ENCODE measurements at regions of chr9 and their contacts with region 1.

Region 1: DNA sequence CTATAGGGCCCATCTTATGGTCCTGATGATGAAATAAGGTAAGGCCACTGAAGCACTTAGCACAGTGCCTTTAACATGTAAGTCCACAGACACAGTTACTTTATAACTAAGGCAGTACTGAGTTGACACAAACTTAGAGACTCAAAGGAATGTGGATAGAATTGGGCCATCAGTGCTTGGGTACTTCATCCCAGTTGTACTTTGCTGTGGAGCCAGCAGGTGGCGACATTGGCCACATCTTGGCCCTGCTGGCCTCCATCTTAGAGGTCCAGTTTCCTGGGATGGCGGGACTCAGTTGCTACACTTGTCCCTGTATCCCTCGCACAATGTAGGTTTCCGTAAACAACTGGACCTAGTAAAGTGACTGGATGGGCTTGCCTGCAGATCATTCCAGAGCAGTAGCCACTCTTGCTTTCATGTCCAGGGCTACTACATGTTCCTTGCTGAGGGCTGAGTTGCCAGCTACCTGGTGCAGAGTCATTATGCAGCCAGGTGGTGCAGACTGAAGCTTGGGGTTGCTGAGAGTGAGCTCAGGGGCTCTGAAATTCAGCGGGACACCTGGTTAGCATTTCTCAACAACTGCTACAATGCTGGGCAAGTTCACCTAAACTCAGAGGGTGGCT is 10.6 kb downstream of the MTAP start:
- DNase-seq: peak; percentile 81
- H3K4me3 ChIP-seq: no peak overlapping the region
- H3K27ac ChIP-seq: peak overlapping the region; percentile 85
- H3K4me1 ChIP-seq: peaks cover 20% of the 10 kb centered on the region
- H3K27me3 ChIP-seq: no peaks in the 10 kb centered on the region
- CTCF ChIP-seq: peak; percentile 86 to 89
- POLR2A ChIP-seq: no peak

Region 2: DNA sequence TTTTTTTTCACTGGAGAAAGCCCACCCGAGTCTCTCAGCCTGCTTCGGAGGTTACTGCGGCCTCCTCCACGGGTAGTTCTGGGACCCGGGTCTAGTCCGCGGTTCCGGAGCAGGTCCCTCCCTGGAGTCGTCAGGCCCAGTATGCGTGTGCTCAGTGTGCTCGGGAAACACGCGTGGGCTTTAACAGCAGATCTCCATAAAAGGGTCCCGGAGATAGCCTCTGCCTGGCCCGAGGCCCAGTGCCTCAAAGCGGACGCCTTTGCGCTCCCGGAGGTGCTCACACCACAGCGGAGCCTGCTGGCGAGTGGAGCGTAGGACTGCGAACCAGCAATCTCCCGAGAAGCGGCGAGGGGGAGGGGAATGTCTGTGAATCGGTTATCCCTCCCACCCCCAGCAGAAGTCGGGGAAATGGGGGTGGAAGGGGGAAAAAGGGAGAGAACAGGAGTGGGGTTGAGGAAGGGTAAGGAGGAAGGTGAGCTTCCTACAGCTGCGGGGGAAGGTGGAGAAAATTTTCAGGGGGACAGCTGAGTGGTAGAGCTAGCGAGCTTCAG is 152.4 kb after region 1 on chr9:
- CTCF ChIA-PET with region 1: interaction called, 39 read pairs
- POLR2A ChIA-PET with region 1: no interaction called
- dilution Hi-C with region 1: no loop called
- intact Hi-C with region 1: loop called (anchors 1 kb)
- DNase-seq: peak; percentile 68
- H3K4me3 ChIP-seq: peak overlapping the region; percentile 34 to 46 (median 40)
- H3K27ac ChIP-seq: no peak overlapping the region
- H3K4me1 ChIP-seq: peaks cover 28% of the 10 kb centered on the region
- H3K27me3 ChIP-seq: peaks cover 57 to 84% of the 10 kb centered on the region in 2 experiments
- CTCF ChIP-seq: peak; percentile 75 to 80
- POLR2A ChIP-seq: no peak

Region 3: DNA sequence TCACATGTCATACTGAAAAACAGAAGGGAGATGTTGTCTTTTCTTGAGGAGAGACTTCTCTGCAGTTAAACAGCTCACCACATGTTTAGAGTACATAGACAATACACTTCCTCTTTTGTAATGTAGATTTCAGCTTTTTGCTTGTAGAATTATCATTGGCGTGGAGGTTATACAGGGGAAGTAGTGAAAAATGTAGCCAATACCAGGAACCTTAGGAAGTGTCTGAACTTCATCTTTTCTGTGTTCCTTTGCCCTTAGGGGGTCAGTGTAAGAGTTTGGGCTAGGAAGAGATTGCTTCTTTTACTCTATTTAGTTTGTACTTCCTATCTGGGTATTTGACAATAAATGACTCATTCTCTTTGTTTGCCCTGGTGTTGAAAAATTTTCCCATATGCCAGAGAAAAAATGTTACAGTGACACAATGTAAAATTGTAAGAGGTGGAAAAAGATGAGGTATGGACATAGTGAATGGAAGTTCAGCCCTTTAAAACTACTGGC is 217.1 kb after region 1 on chr9:
- CTCF ChIA-PET with region 1: interaction called, 77 read pairs
- POLR2A ChIA-PET with region 1: no interaction called
- dilution Hi-C with region 1: no loop called
- intact Hi-C with region 1: no loop called
- DNase-seq: peak; percentile 83
- H3K4me3 ChIP-seq: no peak overlapping the region
- H3K27ac ChIP-seq: peak overlapping the region; percentile 44
- H3K4me1 ChIP-seq: peaks cover 12% of the 10 kb centered on the region
- H3K27me3 ChIP-seq: no peaks in the 10 kb centered on the region
- CTCF ChIP-seq: no peak
- POLR2A ChIP-seq: no peak

Region 4: GRCh38 chr9:22119537-22120158 is 306.6 kb after region 1 on chr9:
- CTCF ChIA-PET with region 1: interaction called, 81 read pairs
- POLR2A ChIA-PET with region 1: no interaction called
- dilution Hi-C with region 1: no loop called
- intact Hi-C with region 1: loop called (anchors 1 kb)
- DNase-seq: peak; percentile 53
- H3K4me3 ChIP-seq: no peak overlapping the region
- H3K27ac ChIP-seq: no peak overlapping the region
- H3K4me1 ChIP-seq: peaks cover 26% of the 10 kb centered on the region
- H3K27me3 ChIP-seq: no peaks in the 10 kb centered on the region
- CTCF ChIP-seq: peak; percentile 35 to 53
- POLR2A ChIP-seq: no peak

Region 5: GRCh38 chr9:22228542-22228941 is 415.5 kb after region 1 on chr9:
- CTCF ChIA-PET with region 1: interaction called, 13 read pairs
- POLR2A ChIA-PET with region 1: no interaction called
- dilution Hi-C with region 1: no loop called
- intact Hi-C with region 1: no loop called
- DNase-seq: peak; percentile 31
- H3K4me3 ChIP-seq: no peak overlapping the region
- H3K27ac ChIP-seq: no peak overlapping the region
- H3K4me1 ChIP-seq: no peaks in the 10 kb centered on the region
- H3K27me3 ChIP-seq: no peaks in the 10 kb centered on the region
- CTCF ChIP-seq: peak; percentile 5 to 15
- POLR2A ChIP-seq: no peak

Region 6: GRCh38 chr9:22307013-22307711 is 494.1 kb after region 1 on chr9:
- CTCF ChIA-PET with region 1: interaction called, 23 read pairs
- POLR2A ChIA-PET with region 1: no interaction called
- dilution Hi-C with region 1: no loop called
- intact Hi-C with region 1: loop called (anchors 1 kb)
- DNase-seq: peak; percentile 54
- H3K4me3 ChIP-seq: no peak overlapping the region
- H3K27ac ChIP-seq: no peak overlapping the region
- H3K4me1 ChIP-seq: no peaks in the 10 kb centered on the region
- H3K27me3 ChIP-seq: peaks cover 0 to 5% of the 10 kb centered on the region in 2 experiments
- CTCF ChIP-seq: peak; percentile 48 to 59
- POLR2A ChIP-seq: no peak

Measured in endothelial cell of umbilical vein (primary cell).